Activated CD4-positive, alpha-beta T cell treated with anti-CD3 and anti-CD28 coated beads for 36 hours (primary cell): ENCODE measurements at regions of chr1 and their contacts with region 1.

Region 1: GRCh38 chr1:40625066-40625465 is 40.4 kb downstream of the RIMS3 start:
- DNase-seq: peak; percentile 62
- ATAC-seq: no peak
- H3K4me3 Mint-ChIP-seq: no peak overlapping the region
- H3K27ac Mint-ChIP-seq: no peak overlapping the region
- H3K4me1 Mint-ChIP-seq: peaks cover 18% of the 10 kb centered on the region
- H3K27me3 Mint-ChIP-seq: peaks cover 3% of the 10 kb centered on the region

Region 2: GRCh38 chr1:40575336-40575735 is 49.7 kb before region 1 on chr1:
- CTCF ChIA-PET with region 1: no interaction called
- POLR2A ChIA-PET with region 1: no interaction called
- intact Hi-C with region 1: loop called in 1 of 2 experiments (anchors 5 kb)
- DNase-seq: no peak
- ATAC-seq: no peak
- H3K4me3 Mint-ChIP-seq: no peak overlapping the region
- H3K27ac Mint-ChIP-seq: no peak overlapping the region
- H3K4me1 Mint-ChIP-seq: no peaks in the 10 kb centered on the region
- H3K27me3 Mint-ChIP-seq: peaks cover 10% of the 10 kb centered on the region

Region 3: GRCh38 chr1:40638097-40639036 is 13.3 kb after region 1 on chr1:
- CTCF ChIA-PET with region 1: no interaction called
- POLR2A ChIA-PET with region 1: no interaction called
- intact Hi-C with region 1: no loop called
- DNase-seq: no peak
- ATAC-seq: no peak
- H3K4me3 Mint-ChIP-seq: no peak overlapping the region
- H3K27ac Mint-ChIP-seq: no peak overlapping the region
- H3K4me1 Mint-ChIP-seq: peaks cover 7% of the 10 kb centered on the region
- H3K27me3 Mint-ChIP-seq: no peaks in the 10 kb centered on the region

Region 4: DNA sequence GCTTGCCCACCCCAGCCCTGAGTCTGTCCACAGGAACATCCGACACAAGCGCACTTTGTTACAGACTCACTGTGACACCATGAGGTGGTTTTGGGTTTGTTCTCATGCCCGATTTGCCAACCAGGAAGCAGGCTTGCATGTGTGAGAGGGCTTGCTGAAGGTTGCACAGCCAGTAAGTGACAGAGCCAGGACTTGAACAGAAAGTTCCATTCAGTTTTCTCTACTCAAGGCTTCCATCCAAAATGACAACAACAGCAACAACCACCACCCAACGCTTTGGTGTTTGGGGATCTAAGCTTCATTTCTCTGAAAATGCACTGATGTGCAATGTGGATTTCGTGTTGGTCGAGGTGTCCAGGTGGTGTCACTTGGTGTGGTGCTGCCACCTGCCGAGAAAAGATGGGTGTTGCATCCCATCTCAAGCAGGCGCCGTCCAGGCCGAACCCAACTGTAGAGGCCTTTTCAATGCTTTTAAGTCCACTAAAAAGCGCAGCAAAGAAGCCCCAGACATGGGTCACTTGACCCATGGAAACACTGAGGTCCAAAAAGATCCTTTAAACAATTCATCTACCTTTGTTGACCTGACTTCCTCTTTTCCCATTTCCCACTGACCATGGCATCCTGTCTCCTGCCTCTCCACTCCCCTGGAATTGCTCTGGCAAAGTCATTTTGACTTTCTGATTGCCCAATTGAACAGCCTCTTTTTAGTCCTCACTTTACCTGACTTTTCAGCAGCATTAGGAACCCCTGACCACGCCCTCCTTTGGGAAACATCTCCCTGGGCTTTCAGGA is 224.9 kb after region 1 on chr1:
- CTCF ChIA-PET with region 1: interaction called, 5 read pairs
- POLR2A ChIA-PET with region 1: no interaction called
- intact Hi-C with region 1: loop called in 1 of 2 experiments (anchors 5 kb)
- DNase-seq: peak; percentile 88
- ATAC-seq: peak; percentile 90
- H3K4me3 Mint-ChIP-seq: no peak overlapping the region
- H3K27ac Mint-ChIP-seq: no peak overlapping the region
- H3K4me1 Mint-ChIP-seq: peaks cover 10% of the 10 kb centered on the region
- H3K27me3 Mint-ChIP-seq: no peaks in the 10 kb centered on the region